ENCODE measurements at regions of chr1 and their contacts with region 1.

Region 1: GRCh38 chr1:89843281-89844121 is 22.7 kb downstream of the LRRC8D start:
- DNase-seq: peak; percentile 68 to 82 (median 78)
- ATAC-seq: peak; percentile 93
- H3K4me3 ChIP-seq: peak overlapping the region; percentile 69
- H3K4me3 Mint-ChIP-seq: peak overlapping the region; percentile 88 to 97 (median 96)
- H3K27ac ChIP-seq: peak overlapping the region; percentile 87
- H3K27ac Mint-ChIP-seq: peak overlapping the region; percentile 83 to 98 (median 94)
- H3K4me1 ChIP-seq: peaks cover 20 to 30% of the 10 kb centered on the region in 2 donors
- H3K4me1 Mint-ChIP-seq: peaks cover 41 to 58% (median 53%) of the 10 kb centered on the region in 7 donors
- H3K27me3 ChIP-seq: no peaks in the 10 kb centered on the region
- H3K27me3 Mint-ChIP-seq: no peaks in the 10 kb centered on the region

Region 2: GRCh38 chr1:88891318-88891950 is 952.1 kb before region 1 on chr1 and contains the start of gene GTF2B:
- CTCF ChIA-PET with region 1: no interaction called
- POLR2A ChIA-PET with region 1: no interaction called
- intact Hi-C with region 1: loop called in 1 of 2 experiments (anchors 5 kb)
- DNase-seq: peak; percentile 86 to 96 (median 94)
- ATAC-seq: peak; percentile 97
- H3K4me3 ChIP-seq: peak within 1 kb of the TSS; percentile 86
- H3K4me3 Mint-ChIP-seq: peak within 1 kb of the TSS; percentile 87 to 99 (median 95)
- H3K27ac ChIP-seq: peak within 1 kb of the TSS; percentile 91
- H3K27ac Mint-ChIP-seq: peak within 1 kb of the TSS; percentile 93 to 98 (median 97)
- H3K4me1 ChIP-seq: peaks cover 26 to 27% of the 10 kb centered on the region in 2 donors
- H3K4me1 Mint-ChIP-seq: peaks cover 23 to 59% (median 48%) of the 10 kb centered on the region in 7 donors
- H3K27me3 ChIP-seq: no peaks in the 10 kb centered on the region
- H3K27me3 Mint-ChIP-seq: peaks cover 0 to 2% (median 0%) of the 10 kb centered on the region in 5 donors
- total RNA-seq, gene GTF2B: 41.3 to 53.6 (median 47.3) TPM

Region 3: GRCh38 chr1:89605692-89606091 is 237.8 kb before region 1 on chr1:
- CTCF ChIA-PET with region 1: interaction called, 5 read pairs
- POLR2A ChIA-PET with region 1: interaction called, 11 read pairs
- intact Hi-C with region 1: loop called in 1 of 2 experiments (anchors 5 kb)
- DNase-seq: no peak
- ATAC-seq: no peak
- H3K4me3 ChIP-seq: peak overlapping the region; percentile 17
- H3K4me3 Mint-ChIP-seq: peak overlapping the region in 8 of 10 donors; percentile 52 to 96 (median 88)
- H3K27ac ChIP-seq: peak overlapping the region; percentile 92
- H3K27ac Mint-ChIP-seq: peak overlapping the region; percentile 97 to 100 (median 99)
- H3K4me1 ChIP-seq: peaks cover 82 to 85% of the 10 kb centered on the region in 2 donors
- H3K4me1 Mint-ChIP-seq: peaks cover 44 to 96% (median 93%) of the 10 kb centered on the region in 7 donors
- H3K27me3 ChIP-seq: no peaks in the 10 kb centered on the region
- H3K27me3 Mint-ChIP-seq: no peaks in the 10 kb centered on the region

Region 4: GRCh38 chr1:89820422-89821321 is 22.8 kb before region 1 on chr1 and contains the start of gene LRRC8D:
- CTCF ChIA-PET with region 1: interaction called, 6 read pairs
- POLR2A ChIA-PET with region 1: interaction called, 47 read pairs
- intact Hi-C with region 1: loop called (anchors 1 kb)
- DNase-seq: peak; percentile 46 to 80 (median 57)
- ATAC-seq: peak; percentile 84
- H3K4me3 ChIP-seq: peak within 1 kb of the TSS; percentile 84
- H3K4me3 Mint-ChIP-seq: peak within 1 kb of the TSS; percentile 85 to 97 (median 89)
- H3K27ac ChIP-seq: peak within 1 kb of the TSS; percentile 66
- H3K27ac Mint-ChIP-seq: peak within 1 kb of the TSS; percentile 67 to 92 (median 81)
- H3K4me1 ChIP-seq: peaks cover 7 to 14% of the 10 kb centered on the region in 2 donors
- H3K4me1 Mint-ChIP-seq: peaks cover 20 to 44% (median 36%) of the 10 kb centered on the region in 7 donors
- H3K27me3 ChIP-seq: no peaks in the 10 kb centered on the region
- H3K27me3 Mint-ChIP-seq: peaks cover 0 to 20% (median 0%) of the 10 kb centered on the region in 5 donors
- total RNA-seq, gene LRRC8D: 21.1 to 42.6 (median 37.3) TPM

Region 5: DNA sequence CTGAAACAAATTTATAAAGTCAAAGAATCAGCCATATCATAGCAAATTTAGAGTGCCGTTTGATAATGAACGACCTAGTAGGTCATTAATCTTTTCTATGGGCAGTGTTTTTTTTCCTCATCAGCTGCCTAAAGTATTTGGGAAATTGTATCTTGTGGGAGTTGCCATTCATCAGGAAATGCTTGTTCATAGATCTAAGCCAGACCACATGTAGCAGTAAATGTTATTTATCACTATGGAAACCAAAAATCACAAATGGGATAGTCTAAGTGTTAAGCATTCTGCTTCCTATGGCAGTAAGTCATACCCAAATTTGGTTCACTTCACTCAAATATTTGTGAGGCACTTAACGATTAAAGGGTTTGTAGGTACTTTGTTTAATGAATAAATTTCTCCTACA is 30.3 kb after region 1 on chr1:
- CTCF ChIA-PET with region 1: interaction called, 9 read pairs
- POLR2A ChIA-PET with region 1: interaction called, 25 read pairs
- intact Hi-C with region 1: loop called (anchors 1 kb)
- DNase-seq: peak in 2 of 9 donors; percentile 32 to 33
- ATAC-seq: peak; percentile 49
- H3K4me3 ChIP-seq: no peak overlapping the region
- H3K4me3 Mint-ChIP-seq: peak overlapping the region in 1 of 10 donors; percentile 26
- H3K27ac ChIP-seq: no peak overlapping the region
- H3K27ac Mint-ChIP-seq: peak overlapping the region in 5 of 9 donors; percentile 11 to 84 (median 73)
- H3K4me1 ChIP-seq: peaks cover 5 to 21% of the 10 kb centered on the region in 2 donors
- H3K4me1 Mint-ChIP-seq: peaks cover 27 to 89% (median 73%) of the 10 kb centered on the region in 7 donors
- H3K27me3 ChIP-seq: no peaks in the 10 kb centered on the region
- H3K27me3 Mint-ChIP-seq: no peaks in the 10 kb centered on the region

Region 6: GRCh38 chr1:89953072-89953626 is 109.6 kb after region 1 on chr1:
- CTCF ChIA-PET with region 1: interaction called, 3 read pairs
- POLR2A ChIA-PET with region 1: no interaction called
- intact Hi-C with region 1: loop called (anchors 1 to 10 kb)
- DNase-seq: peak in 3 of 9 donors; percentile 5 to 24 (median 6)
- ATAC-seq: peak; percentile 60
- H3K4me3 ChIP-seq: no peak overlapping the region
- H3K4me3 Mint-ChIP-seq: no peak overlapping the region
- H3K27ac ChIP-seq: no peak overlapping the region
- H3K27ac Mint-ChIP-seq: peak overlapping the region in 3 of 9 donors; percentile 6 to 50 (median 25)
- H3K4me1 ChIP-seq: peaks cover 0 to 10% of the 10 kb centered on the region in 2 donors
- H3K4me1 Mint-ChIP-seq: peaks cover 10 to 39% (median 17%) of the 10 kb centered on the region in 7 donors
- H3K27me3 ChIP-seq: no peaks in the 10 kb centered on the region
- H3K27me3 Mint-ChIP-seq: peaks cover 0 to 1% (median 0%) of the 10 kb centered on the region in 5 donors